Activated CD4-positive, alpha-beta memory T cell treated with anti-CD3 and anti-CD28 coated beads, Interleukin-2, amount 10 ng/mL, durations not matched to agents 7 days and 5 days (primary cell): ENCODE measurements at regions of chr4 and their contacts with region 1.

Region 1: GRCh38 chr4:13654158-13654797 is 26.8 kb upstream of the BOD1L1 start:
- DNase-seq: peak; percentile 80
- H3K4me3 Mint-ChIP-seq: peak overlapping the region; percentile 73
- H3K27ac Mint-ChIP-seq: no peak overlapping the region
- H3K4me1 Mint-ChIP-seq: peaks cover 20% of the 10 kb centered on the region
- H3K27me3 Mint-ChIP-seq: peaks cover 18% of the 10 kb centered on the region

Region 2: GRCh38 chr4:13567125-13567524 is 87.2 kb before region 1 on chr4:
- CTCF ChIA-PET with region 1: no interaction called
- POLR2A ChIA-PET with region 1: no interaction called
- DNase-seq: no peak
- H3K4me3 Mint-ChIP-seq: no peak overlapping the region
- H3K27ac Mint-ChIP-seq: no peak overlapping the region
- H3K4me1 Mint-ChIP-seq: no peaks in the 10 kb centered on the region
- H3K27me3 Mint-ChIP-seq: no peaks in the 10 kb centered on the region

Region 3: DNA sequence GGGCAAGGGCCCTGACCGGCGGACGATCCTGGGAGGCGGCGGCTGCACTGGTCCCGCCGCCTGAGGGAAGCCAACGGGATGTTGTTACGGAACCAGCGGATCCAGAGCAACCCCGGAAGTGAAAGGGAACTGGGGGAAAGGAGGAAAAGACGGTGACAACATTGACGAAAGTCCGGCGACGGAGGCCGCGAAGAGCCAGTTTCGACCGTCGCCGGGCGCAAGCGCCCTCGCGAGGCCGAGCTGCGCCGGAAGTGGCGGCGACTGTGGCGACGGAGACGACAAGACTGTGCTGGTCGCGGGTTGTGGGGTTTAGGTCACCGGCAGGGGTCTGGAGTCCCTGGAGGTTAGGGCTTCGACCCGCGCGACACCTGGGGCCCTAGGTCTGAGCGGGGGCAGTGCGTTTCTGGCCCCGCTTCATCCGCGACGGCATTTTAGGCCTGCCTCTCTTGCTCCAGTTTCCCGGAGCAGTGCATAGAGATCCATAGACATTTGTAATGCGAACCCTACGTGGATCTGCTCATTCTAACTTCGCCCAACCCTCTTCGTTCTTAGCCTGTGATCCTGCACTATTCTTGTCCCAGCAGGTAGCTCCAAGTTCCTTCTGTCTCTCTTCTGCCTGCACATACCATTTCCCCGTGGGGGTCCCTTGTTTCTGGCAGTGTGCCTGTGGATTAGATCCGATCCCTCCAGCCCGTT is 26.5 kb before region 1 on chr4 and contains the start of gene BOD1L1:
- CTCF ChIA-PET with region 1: interaction called, 22 read pairs
- POLR2A ChIA-PET with region 1: interaction called, 7 read pairs
- DNase-seq: peak; percentile 84
- H3K4me3 Mint-ChIP-seq: peak within 1 kb of the TSS; percentile 88
- H3K27ac Mint-ChIP-seq: peak within 1 kb of the TSS; percentile 81
- H3K4me1 Mint-ChIP-seq: peaks cover 34% of the 10 kb centered on the region
- H3K27me3 Mint-ChIP-seq: no peaks in the 10 kb centered on the region
- total RNA-seq, gene BOD1L1: 32.2 to 34.8 TPM

Region 4: DNA sequence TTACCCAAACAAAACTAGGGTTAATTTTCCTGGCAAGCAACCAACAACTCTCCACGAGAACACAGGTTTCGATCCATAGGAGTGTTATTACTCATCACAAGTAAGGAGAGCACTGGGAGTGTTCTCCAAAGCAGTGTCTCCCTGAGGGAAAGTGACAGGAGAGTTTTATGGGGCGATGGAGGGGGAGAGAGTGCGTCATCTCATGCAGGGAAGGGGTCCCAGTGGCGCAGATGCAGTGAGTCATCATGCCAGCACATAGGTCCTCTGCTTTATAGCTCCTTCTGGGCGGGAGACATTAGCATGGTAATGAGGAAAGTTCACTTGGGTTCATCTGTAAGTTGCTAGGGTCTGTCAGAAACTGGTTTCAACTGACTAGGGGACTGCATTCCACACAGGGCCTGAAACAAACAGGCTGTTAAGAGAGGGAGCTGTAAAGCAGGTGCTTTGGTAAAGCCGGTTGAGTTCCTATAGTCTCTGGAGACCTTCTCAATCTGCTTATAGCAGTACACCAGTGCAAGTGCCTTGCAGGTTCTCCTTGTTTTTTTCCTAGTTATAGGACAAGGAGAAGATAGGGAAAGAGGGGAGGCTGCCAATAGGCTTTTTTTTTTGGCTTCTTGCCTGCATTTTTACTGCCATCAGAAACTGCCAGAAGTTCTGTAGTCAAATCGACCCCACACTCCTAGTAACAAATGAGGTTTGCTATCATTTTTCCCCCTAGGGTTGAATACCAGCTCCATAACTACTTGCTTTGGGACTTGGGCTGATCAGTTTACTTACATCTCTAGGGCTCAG is 13.9 kb before region 1 on chr4:
- CTCF ChIA-PET with region 1: interaction called, 60 read pairs
- POLR2A ChIA-PET with region 1: interaction called, 3 read pairs
- DNase-seq: no peak
- H3K4me3 Mint-ChIP-seq: no peak overlapping the region
- H3K27ac Mint-ChIP-seq: no peak overlapping the region
- H3K4me1 Mint-ChIP-seq: no peaks in the 10 kb centered on the region
- H3K27me3 Mint-ChIP-seq: peaks cover 29% of the 10 kb centered on the region